Right ventricle myocardium superior (tissue), 1 donor: ENCODE measurements at regions of chr9 and their contacts with region 1.

Region 1: GRCh38 chr9:125631391-125632085 is 75.5 kb downstream of the MAPKAP1 start:
- DNase-seq: no peak
- ATAC-seq: peak; percentile 69

Region 2: DNA sequence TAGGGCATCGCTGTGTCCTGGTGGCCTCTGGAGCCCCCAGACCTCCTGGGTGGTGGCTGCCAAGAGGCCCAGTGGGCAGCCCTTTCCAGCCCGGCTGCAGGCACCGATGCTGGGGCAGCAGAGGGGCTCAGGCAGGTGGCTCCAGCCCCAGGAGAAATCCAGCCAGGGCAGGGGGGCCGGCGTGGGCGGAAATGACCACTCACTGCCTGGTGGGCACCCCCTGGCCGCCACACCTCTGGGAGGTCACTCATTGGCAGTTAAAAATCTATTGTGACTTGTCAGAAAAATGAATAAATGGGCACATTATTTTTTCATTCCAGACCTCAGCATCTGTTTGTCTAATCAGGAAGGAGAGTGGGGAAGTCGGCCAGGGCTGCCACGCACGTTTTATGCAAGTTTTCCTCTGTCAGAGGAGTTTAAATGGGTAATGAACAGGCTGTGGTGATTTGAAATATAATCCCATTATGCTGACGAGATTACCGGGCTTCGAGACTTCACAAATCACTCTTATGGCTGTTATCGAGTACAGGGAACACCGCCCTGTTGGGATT is 198.0 kb before region 1 on chr9:
- intact Hi-C with region 1: loop called (anchors 10 kb)
- DNase-seq: peak; percentile 26
- ATAC-seq: no peak

Region 3: DNA sequence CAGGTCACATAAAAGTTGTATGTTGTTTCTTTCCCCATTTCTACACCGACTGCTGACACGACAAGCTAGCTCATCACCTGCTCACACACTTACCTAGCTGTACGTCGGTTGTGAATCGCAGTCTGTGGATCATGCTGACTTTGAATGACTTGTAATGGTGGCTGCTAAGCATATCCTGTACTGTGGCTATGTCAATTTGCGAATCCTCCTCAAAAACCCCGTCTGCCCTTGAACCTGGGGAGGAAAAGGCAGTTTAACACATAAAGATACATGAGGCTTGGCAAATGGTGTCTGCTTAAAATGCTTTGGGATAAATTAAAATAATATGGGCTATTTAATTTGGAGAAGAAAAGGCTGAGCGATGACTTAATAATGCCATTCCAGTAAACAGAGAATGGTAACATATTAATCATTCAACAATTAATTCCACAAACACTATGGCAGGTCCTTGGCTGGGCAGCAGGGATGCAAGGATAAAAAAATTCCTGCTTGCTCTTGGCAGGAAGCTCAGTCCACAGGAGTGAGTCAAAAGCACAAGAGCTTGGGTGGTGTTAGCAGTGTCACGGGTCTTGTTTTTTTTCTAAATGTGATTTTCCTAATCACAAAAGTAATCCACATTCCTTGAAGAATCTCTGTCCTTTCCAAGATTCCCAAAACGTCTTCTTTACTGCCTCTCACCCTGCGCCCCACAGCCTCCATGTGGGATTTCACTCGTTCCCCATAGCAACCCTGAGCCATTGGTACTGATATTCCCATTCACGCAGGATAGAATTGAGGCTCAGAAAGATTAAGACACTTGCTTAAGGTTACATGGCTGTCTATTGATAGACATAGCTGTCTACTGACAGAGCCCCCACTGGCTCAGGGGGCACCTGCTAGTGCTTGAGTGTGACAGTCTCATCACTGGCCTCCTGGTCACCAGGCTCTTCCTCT is 146.9 kb before region 1 on chr9:
- intact Hi-C with region 1: no loop called
- DNase-seq: no peak
- ATAC-seq: peak; percentile 50

Region 4: DNA sequence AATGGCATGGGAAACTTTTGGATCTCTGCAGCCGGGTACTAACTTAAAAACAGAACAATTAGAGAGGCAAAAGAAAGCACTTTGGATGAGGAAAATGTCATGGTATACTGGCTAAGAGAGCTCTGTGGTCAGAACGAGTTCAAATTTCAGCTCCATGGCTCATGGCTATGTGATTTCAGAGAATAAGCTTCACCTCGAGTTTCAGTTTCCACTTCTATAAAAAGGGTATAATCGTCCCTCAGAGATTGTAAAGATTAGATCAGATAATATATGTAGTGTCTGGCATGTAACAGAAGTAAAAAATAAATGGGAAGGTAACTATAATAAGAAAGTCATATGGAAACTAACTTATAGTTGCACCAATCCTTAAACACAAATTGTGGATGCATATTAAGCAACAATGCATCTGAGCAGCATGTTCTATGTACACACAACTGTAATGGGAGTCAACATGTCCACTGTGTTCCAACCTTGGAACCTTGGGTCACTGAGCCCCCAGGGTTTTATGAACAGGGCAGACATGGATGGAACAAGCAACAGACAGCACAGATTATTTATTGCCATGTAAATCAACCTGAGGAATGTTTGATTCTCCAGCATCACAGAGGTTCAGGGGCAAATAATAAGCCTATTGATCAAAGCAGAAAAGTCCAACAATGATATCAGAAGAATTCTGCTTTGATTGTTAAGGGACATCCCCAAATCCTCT is 69.9 kb before region 1 on chr9:
- intact Hi-C with region 1: loop called (anchors 5 kb)
- DNase-seq: no peak
- ATAC-seq: no peak

Region 5: DNA sequence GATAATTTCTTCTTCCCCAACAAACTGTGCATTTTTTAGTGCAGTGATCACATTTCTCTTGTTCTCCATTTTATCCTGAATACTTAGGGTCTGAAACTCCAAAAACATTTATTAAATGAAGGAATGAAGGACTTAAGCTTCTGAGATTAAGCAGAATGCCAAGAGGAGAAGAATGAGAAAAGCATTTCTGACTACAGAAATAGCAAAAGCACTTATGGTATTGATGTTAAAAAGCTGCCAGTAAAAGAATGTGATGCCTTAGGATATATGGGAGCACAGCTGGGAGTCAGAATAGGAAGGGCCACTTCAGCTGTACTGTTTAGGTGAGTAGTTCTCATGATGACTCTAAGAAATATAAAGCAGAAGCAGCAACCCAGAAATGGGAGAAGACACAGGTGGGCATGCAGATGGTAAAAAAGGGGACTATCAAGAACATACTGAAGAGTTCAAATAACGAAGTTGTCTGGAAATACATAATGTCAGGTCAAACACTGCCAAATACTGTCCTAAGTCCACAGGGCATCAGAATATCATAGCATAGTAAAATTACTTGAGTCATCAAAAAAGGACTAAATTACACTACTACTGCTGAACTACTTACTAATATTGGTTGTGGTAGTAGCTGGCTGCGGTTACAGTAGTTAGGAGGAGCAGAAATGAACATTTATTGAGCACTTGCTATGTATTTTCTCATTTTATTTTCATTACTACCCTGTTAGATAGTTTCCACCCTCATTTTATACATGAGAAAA is 57.2 kb before region 1 on chr9:
- intact Hi-C with region 1: no loop called
- DNase-seq: no peak
- ATAC-seq: no peak

Region 6: GRCh38 chr9:125593585-125594229 is 37.8 kb before region 1 on chr9:
- intact Hi-C with region 1: no loop called
- DNase-seq: no peak
- ATAC-seq: no peak

Region 7: GRCh38 chr9:125746017-125746773 is 114.7 kb after region 1 on chr9:
- intact Hi-C with region 1: no loop called
- DNase-seq: peak; percentile 97
- ATAC-seq: peak; percentile 97